Right cardiac atrium (tissue), 5 donors: ENCODE measurements at regions of chr1 and their contacts with region 1.

Region 1: DNA sequence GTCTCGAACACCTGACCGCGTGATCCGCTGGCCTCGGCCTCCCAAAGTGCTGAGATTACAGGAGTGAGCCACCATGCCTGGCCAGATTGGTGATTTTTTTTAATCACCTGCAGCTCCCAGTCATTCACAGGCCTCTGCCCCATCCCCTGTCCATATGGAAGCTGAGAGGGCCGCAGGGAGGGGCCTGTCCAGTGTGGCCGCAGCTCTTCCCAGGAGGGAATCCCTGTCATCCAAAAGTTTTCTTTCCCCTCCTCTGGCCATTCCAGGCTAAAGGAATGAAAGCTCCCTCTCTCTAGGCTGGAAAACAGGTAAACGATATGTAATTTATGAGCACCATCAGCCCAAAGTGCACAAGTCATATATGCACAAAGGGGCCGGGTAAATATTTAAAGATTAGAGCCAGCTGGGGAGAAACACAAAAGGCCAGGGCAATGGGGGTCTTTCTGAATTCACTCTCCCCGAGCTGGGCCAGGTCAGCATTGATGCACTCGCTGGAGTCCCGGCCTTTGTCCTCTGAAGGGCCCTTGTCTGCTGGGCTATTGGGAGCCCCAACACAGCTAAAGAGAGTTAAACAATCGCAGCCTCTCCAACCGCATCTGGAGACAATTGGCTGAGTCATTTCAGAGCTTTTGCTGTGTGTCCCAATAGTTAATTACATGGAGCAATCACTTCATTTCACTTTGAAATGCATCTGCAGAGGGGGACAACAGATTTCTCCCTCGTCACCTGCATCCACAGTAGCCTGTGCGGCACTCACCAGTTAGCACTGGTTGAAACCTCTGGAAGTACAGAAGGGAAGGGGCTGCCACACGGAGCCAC is 3.8 kb upstream of the HES3 start:
- DNase-seq: peak in 1 of 3 donors; percentile 27
- ATAC-seq: no peak
- H3K4me3 ChIP-seq: no peak overlapping the region
- H3K27ac ChIP-seq: no peak overlapping the region
- H3K4me1 ChIP-seq: peaks cover 1% of the 10 kb centered on the region
- H3K27me3 ChIP-seq: no peaks in the 10 kb centered on the region

Region 2: DNA sequence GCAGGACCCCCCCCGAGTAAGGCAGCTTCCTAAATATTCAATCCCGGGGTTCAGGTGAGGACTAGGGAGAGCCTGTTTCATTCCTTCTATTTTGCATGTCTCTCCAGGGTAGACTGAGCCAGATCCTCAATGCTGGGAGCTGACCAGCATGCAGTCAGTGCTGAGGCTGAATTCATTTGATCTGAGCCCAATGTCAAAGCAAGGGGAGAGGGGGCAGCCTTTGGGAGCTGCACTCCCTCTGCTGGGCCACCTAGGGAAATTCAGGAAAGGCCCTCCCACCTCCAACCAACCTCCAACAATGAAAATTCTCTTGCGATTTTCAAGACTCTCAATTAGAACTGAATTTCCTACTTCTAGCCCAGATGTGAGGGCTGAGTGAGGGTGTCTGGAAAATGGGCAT is 619.2 kb before region 1 on chr1:
- intact Hi-C with region 1: no loop called
- DNase-seq: no peak
- ATAC-seq: peak; percentile 25 to 61
- H3K4me3 ChIP-seq: no peak overlapping the region
- H3K27ac ChIP-seq: no peak overlapping the region
- H3K4me1 ChIP-seq: no peaks in the 10 kb centered on the region
- H3K27me3 ChIP-seq: no peaks in the 10 kb centered on the region

Region 3: GRCh38 chr1:6199298-6200187 is 40.6 kb before region 1 on chr1 and contains the start of gene RPL22:
- intact Hi-C with region 1: loop called in 1 of 4 experiments (anchors 5 kb)
- DNase-seq: peak; percentile 99 to 100 (median 99)
- ATAC-seq: peak; percentile 98 to 99
- H3K4me3 ChIP-seq: peak within 1 kb of the TSS; percentile 89
- H3K27ac ChIP-seq: peak within 1 kb of the TSS; percentile 93
- H3K4me1 ChIP-seq: peaks cover 5% of the 10 kb centered on the region
- H3K27me3 ChIP-seq: no peaks in the 10 kb centered on the region
- total RNA-seq, gene RPL22: 247 to 309 (median 276) TPM